ENCODE measurements at regions of chr15 and their contacts with region 1.

Region 1: DNA sequence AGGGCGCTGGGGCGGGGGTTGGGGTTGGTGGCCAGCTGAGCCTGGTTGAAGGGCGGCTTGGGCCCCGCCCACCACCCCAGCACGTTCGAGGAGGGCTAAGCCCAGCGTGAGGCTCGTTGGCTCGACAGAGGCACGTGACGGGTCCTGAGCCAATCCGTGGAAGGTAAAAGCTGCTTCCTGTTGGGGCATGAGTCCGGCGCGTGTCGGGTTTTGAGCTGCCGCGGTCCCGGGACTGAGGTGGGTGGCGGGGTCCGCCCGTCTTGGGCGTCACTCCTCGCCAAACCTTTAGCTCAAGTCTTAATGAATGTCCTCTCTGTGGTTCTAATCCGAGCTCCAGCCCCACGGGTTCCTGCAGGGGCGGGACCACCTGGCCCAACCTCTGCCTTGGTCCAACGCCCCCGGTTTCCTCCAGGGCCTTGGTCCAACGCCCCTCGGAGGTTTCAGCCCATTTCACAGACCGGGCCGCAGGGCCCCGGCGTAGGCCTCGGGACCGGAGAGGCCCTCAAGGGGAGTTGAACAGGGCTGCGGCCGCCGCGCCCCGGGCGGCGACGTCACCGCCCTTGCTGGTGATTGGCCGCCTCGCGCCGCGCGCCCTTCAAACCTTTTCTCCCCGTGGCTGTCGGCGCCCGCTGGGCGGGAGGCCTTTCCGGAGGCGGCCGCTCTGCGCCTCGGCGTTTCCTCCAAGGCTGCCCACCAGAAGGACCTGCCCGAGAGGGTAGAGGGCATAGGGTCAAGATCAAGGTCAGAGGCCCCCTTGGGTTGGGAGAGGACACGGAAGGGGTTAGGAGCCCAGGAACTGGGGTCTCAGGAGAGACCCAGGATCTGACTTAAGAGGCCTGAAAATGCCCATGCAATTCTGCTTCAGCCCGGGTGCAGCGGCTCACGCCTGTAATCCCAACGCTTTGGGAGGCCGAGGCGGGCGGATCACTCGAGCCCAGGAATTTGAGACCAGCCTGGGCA is at the start of gene RCCD1:
- DNase-seq: peak; percentile 93 to 96 (median 93)
- H3K4me3 ChIP-seq: peak within 1 kb of the TSS; percentile 67 to 81 (median 79)
- H3K4me3 Mint-ChIP-seq: peak within 1 kb of the TSS; percentile 81 to 88
- H3K27ac ChIP-seq: peak within 1 kb of the TSS; percentile 79 to 94
- H3K27ac Mint-ChIP-seq: peak within 1 kb of the TSS; percentile 89 to 96 (median 94)
- H3K4me1 ChIP-seq: peaks cover 17 to 30% of the 10 kb centered on the region in 2 donors
- H3K4me1 Mint-ChIP-seq: peaks cover 19% of the 10 kb centered on the region
- H3K27me3 ChIP-seq: no peaks in the 10 kb centered on the region
- H3K27me3 Mint-ChIP-seq: no peaks in the 10 kb centered on the region
- CTCF ChIP-seq: no peak
- polyA plus RNA-seq, gene RCCD1: 1.2 to 2.8 (median 1.5) TPM

Region 2: GRCh38 chr15:90902040-90902839 is 52.8 kb before region 1 on chr15:
- intact Hi-C with region 1: no loop called
- DNase-seq: peak; percentile 64 to 74 (median 73)
- H3K4me3 ChIP-seq: peak overlapping the region; percentile 54 to 81 (median 66)
- H3K4me3 Mint-ChIP-seq: peak overlapping the region; percentile 81 to 86
- H3K27ac ChIP-seq: peak overlapping the region; percentile 77 to 80
- H3K27ac Mint-ChIP-seq: peak overlapping the region; percentile 78 to 90 (median 88)
- H3K4me1 ChIP-seq: peaks cover 22 to 31% of the 10 kb centered on the region in 2 donors
- H3K4me1 Mint-ChIP-seq: peaks cover 30% of the 10 kb centered on the region
- H3K27me3 ChIP-seq: no peaks in the 10 kb centered on the region
- H3K27me3 Mint-ChIP-seq: peaks cover 0 to 9% (median 7%) of the 10 kb centered on the region in 3 donors
- CTCF ChIP-seq: peak; percentile 83

Region 3: DNA sequence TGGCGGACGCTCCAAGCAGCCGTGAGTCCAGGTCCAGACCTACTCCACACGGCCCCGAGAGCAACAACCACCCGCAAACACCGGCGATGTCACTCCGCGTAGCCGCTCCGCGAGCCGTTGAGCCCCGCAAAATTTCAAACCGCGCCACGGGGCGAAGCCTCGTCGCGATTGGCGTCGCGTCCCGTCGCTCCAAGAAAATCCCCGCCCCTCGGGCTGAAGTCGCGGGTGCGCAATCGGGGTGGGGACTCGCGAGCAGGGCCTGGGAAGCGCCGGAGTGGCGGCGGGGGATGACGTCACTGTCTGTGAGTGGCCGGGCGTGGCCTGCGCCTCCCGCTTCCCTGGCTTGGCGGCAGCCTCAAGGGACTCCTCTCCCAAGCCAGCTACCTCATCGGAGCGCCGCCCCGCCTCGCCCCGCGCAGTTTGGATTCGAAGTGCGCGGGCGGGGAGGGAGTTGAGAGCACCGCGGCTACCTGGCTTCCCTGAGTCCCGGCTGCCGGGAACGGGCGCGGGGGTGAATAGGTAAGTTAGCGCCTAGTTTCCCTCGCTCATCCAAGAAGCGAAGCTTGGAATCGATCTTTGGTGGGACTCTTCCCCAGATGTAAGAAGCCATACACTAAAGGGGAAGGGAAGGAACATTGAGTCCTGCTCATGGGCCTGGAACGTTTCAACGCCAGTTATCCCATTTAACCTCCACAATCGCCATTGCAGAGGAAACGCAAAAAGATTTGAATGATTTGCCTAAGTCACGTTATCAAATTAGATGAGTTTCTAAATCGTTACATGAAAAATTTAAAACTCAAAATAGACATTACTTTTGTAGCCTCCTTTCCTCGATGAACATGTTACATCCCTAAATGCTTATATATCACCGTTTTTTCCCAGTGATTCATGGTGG is 39.7 kb after region 1 on chr15 and contains the start of gene PRC1:
- intact Hi-C with region 1: loop called in 1 of 2 experiments (anchors 2 kb)
- DNase-seq: peak; percentile 97
- H3K4me3 ChIP-seq: peak within 1 kb of the TSS; percentile 67 to 99 (median 74)
- H3K4me3 Mint-ChIP-seq: peak within 1 kb of the TSS; percentile 99 to 100
- H3K27ac ChIP-seq: peak within 1 kb of the TSS; percentile 68 to 87
- H3K27ac Mint-ChIP-seq: peak within 1 kb of the TSS; percentile 92 to 98 (median 96)
- H3K4me1 ChIP-seq: peaks cover 13 to 16% of the 10 kb centered on the region in 2 donors
- H3K4me1 Mint-ChIP-seq: peaks cover 26% of the 10 kb centered on the region
- H3K27me3 ChIP-seq: no peaks in the 10 kb centered on the region
- H3K27me3 Mint-ChIP-seq: no peaks in the 10 kb centered on the region
- CTCF ChIP-seq: no peak
- polyA plus RNA-seq, gene PRC1: 1.6 to 6.9 (median 2.0) TPM

Region 4: DNA sequence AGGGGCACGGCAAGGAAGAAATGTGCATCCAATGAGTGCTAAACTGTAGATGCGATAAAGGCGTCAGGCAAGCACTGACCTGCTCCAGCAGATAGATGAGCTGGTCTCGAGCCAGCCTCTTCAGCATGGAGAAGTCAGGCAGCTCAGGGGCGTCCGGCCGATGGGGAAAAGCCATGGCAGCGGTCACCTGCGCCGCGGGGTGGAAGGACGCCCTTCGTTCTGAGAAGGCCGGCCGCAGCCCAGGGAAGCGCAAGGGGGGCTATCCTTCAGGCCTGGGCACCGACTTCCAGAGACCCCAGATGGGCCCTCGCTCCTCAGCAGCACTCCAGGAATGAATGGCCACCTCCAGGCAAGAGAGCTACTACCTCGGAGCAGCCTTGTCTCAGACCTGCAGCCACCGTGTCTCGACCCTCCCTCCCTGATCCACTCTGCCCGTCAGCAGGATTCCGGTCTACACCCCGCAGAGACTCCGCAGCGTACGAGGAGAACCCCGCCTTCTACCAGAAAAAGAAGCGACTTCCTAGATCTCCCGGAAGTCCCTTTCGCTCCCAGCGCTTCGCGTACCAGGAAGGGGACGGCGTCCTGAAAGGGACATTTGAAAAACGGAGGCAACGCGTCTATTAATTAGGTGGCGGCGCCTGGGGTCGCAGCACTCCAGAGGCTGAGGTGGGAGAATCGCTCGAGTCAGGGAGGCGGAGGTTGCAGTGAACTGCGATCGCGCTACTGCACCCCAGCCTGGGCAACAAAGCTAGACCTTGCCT is 67.3 kb after region 1 on chr15 and contains the start of gene VPS33B:
- intact Hi-C with region 1: loop called in 1 of 2 experiments (anchors 10 kb)
- DNase-seq: peak; percentile 62 to 82 (median 78)
- H3K4me3 ChIP-seq: peak within 1 kb of the TSS; percentile 89 to 100 (median 91)
- H3K4me3 Mint-ChIP-seq: peak within 1 kb of the TSS; percentile 98
- H3K27ac ChIP-seq: peak within 1 kb of the TSS; percentile 55 to 92
- H3K27ac Mint-ChIP-seq: peak within 1 kb of the TSS; percentile 87 to 94 (median 88)
- H3K4me1 ChIP-seq: peaks cover 19 to 25% of the 10 kb centered on the region in 2 donors
- H3K4me1 Mint-ChIP-seq: peaks cover 37% of the 10 kb centered on the region
- H3K27me3 ChIP-seq: no peaks in the 10 kb centered on the region
- H3K27me3 Mint-ChIP-seq: peaks cover 0 to 1% (median 0%) of the 10 kb centered on the region in 3 donors
- CTCF ChIP-seq: no peak
- polyA plus RNA-seq, gene VPS33B: 4.0 to 16.9 (median 4.8) TPM

Region 5: DNA sequence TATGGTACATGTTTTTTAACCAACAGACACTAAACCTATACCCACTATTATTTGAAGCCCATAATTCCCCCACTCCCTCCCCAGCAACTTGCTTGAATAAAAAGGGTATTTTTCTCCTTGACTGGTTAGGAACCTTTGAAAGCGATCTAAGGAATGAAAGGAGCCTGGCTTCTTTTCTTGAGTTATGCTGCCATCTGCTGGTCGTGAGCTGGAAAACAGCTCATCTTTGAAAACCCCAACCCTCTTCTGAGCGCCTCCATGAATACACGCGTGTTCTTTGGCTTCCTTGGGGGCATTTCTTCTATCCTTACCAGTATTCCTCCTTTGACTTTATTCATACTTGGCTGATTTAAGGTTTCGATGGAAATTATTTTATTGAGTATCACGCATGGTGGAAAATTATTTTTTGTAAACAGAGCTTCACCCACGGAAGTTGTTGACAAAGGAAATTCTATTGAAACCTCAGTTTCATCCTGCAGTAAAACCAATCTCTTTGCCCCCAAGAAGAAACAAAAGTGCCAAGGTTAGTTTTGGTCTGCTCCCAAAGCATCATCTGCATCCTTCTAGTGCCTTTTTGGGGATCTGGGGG is 316.7 kb after region 1 on chr15:
- intact Hi-C with region 1: loop called (anchors 2 to 10 kb)
- DNase-seq: peak; percentile 62 to 70 (median 70)
- H3K4me3 ChIP-seq: no peak overlapping the region
- H3K4me3 Mint-ChIP-seq: peak overlapping the region in 1 of 2 donors; percentile 55
- H3K27ac ChIP-seq: no peak overlapping the region
- H3K27ac Mint-ChIP-seq: no peak overlapping the region
- H3K4me1 ChIP-seq: no peaks in the 10 kb centered on the region
- H3K4me1 Mint-ChIP-seq: peaks cover 3% of the 10 kb centered on the region
- H3K27me3 ChIP-seq: peaks cover 0 to 4% of the 10 kb centered on the region in 2 donors
- H3K27me3 Mint-ChIP-seq: peaks cover 2 to 11% (median 3%) of the 10 kb centered on the region in 3 donors
- CTCF ChIP-seq: peak; percentile 88

Measured in CD14-positive monocyte (primary cell).